ENCODE measurements at regions of chr1 and their contacts with region 1.

Region 1: DNA sequence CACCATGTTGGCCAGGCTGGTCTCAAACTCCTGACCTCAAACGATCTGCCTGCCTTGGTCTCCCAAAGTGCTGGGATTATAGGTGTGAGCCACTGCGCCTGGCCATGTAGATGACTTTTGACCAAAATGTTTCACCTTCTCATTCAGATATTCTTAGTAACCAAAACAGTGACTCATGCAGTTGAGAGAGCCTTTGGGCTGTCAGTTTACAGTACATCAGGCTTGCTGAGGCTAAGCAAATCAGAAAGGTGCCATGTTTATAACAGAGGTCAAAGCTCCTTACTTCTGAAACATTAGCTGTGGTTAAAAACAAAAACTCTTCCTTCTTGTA is 21.0 kb downstream of the CNIH4 start:
- DNase-seq: peak; percentile 71
- H3K4me3 Mint-ChIP-seq: peak overlapping the region; percentile 56
- H3K27ac Mint-ChIP-seq: peak overlapping the region; percentile 84
- H3K4me1 Mint-ChIP-seq: peaks cover 84% of the 10 kb centered on the region
- H3K27me3 Mint-ChIP-seq: no peaks in the 10 kb centered on the region

Region 2: GRCh38 chr1:223831755-223832636 is 545.6 kb before region 1 on chr1:
- intact Hi-C with region 1: loop called (anchors 5 kb)
- DNase-seq: no peak
- H3K4me3 Mint-ChIP-seq: peak overlapping the region; percentile 51
- H3K27ac Mint-ChIP-seq: peak overlapping the region; percentile 85
- H3K4me1 Mint-ChIP-seq: peaks cover 29% of the 10 kb centered on the region
- H3K27me3 Mint-ChIP-seq: no peaks in the 10 kb centered on the region

Region 3: GRCh38 chr1:224182866-224183590 is 194.6 kb before region 1 on chr1 and contains the start of gene DEGS1:
- intact Hi-C with region 1: loop called (anchors 1 kb)
- DNase-seq: peak; percentile 95
- H3K4me3 Mint-ChIP-seq: peak within 1 kb of the TSS; percentile 96
- H3K27ac Mint-ChIP-seq: peak within 1 kb of the TSS; percentile 97
- H3K4me1 Mint-ChIP-seq: peaks cover 45% of the 10 kb centered on the region
- H3K27me3 Mint-ChIP-seq: peaks cover 3% of the 10 kb centered on the region
- total RNA-seq, gene DEGS1: 51.8 and 56.3 TPM in 2 replicates

Region 4: GRCh38 chr1:224356685-224357625 is 20.7 kb before region 1 on chr1 and contains the start of gene CNIH4:
- intact Hi-C with region 1: loop called (anchors 1 kb)
- DNase-seq: peak; percentile 97
- H3K4me3 Mint-ChIP-seq: peak within 1 kb of the TSS; percentile 80
- H3K27ac Mint-ChIP-seq: peak within 1 kb of the TSS; percentile 92
- H3K4me1 Mint-ChIP-seq: peaks cover 38% of the 10 kb centered on the region
- H3K27me3 Mint-ChIP-seq: no peaks in the 10 kb centered on the region
- total RNA-seq, gene CNIH4: 77.2 and 78.1 TPM in 2 replicates

Region 5: DNA sequence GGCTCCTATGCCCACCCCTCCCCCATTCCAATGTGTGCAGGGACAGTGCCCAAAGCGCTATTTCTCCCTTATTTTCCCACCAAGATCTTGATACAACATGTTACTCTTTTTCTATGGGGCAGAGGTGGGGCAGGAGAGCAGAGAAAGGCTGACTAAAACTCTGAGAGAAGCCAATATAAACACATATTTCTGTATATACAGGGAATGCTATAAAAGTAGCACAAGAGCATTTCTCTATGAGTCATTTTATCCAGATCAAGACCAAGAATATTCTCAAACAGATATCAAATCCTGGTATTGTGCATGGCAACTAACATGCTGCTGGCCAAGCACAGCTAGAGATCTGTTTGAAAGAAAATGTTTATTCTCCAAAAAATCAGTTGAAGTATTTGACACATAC is 49.7 kb after region 1 on chr1:
- intact Hi-C with region 1: no loop called
- DNase-seq: peak; percentile 44
- H3K4me3 Mint-ChIP-seq: no peak overlapping the region
- H3K27ac Mint-ChIP-seq: no peak overlapping the region
- H3K4me1 Mint-ChIP-seq: peaks cover 37% of the 10 kb centered on the region
- H3K27me3 Mint-ChIP-seq: no peaks in the 10 kb centered on the region

Measured in activated CD4-positive, alpha-beta T cell treated with anti-CD3 and anti-CD28 coated beads, Interleukin-2, amount 10 ng/mL, durations not matched to agents 24 days and 14 days (primary cell).